A549 (cell line): ENCODE measurements at regions of chr9 and their contacts with region 1.

Region 1: DNA sequence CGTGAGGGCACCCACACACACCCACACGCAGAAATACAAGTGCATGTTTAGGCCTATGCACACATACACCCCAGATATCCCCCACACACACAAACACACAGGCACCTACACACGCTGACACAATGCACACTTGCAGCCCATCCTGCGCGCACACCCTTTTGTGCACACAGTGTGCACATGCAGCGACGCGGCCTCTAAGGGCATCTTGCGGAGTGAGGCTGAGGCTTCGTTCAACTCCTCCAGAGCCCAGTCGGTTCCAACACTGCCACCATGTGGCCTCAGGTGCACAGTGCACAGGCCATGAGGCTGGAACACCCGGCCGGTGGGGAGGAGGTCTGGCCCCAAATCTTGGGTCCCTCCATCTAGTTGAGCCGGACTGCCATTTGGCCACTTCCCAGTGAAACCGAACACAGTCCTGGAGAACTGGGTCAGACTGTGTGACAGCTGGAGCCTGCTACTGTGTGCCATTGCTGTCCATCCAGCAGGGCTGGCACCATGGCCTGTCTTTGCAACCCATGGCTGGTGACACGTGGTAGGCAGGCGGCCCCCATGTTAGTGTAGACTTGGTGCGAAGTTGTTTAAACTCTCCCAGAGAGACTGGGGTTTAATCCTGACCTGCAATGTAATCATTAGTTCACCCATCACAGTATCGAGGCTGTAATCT is 97.7 kb upstream of the MVB12B start:
- DNase-seq: peak; percentile 73 to 76
- ATAC-seq: peak; percentile 86 to 97
- H3K4me3 ChIP-seq: no peak overlapping the region
- H3K27ac ChIP-seq: no peak overlapping the region
- H3K4me1 ChIP-seq: no peaks in the 10 kb centered on the region
- CTCF ChIP-seq: peak; percentile 78
- EP300 ChIP-seq: no peak
- POLR2A ChIP-seq: no peak
- RAD21 ChIP-seq: peak; percentile 80 to 84

Region 2: DNA sequence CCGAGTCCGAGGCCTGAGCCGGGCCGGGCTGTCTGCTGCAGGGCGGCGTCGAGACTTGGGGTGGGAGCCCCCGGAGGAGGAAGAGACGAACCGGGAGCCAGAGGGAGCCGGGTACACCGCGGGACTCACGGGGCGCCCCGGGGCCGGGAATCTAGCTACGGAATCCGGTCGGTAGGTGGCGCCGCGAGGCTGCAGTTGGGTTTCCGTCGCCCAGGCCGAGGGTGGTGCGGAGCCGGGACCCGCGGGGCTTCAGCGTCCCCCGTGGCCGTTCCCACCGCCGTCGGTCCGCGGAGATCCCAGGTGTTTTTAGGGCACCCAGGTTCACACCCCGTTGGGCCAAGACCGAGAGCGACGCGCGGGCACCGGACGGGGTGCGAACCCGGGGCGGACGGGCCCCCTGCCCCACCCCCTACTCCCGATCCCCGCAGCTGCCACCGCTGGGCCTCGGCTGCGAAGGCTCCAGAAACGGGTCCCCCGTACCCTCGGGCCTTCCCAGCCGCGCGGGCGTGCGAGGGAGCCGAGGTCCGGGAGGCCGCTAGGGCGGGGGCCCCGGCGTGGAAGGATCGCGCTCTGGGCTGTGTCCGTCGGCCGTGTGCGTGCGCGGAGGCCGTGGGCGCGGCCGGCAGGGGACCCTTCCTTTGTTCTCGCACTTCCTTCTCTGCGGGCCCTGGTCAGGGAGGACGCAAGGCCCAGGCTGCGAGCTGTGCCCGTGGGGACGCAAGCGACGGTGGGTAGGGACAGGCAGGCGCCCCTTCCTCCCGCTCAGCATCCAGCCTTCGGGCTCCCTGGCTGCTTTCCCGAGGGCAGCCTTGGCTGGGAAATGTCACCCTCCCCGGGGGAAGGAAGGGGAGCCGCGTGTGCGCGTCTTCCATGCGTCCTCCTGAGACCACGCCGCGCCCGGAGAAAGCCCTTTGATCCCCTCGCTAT is 820.7 kb before region 1 on chr9:
- CTCF ChIA-PET with region 1: interaction called, 97 read pairs
- POLR2A ChIA-PET with region 1: no interaction called
- DNase-seq: peak; percentile 74 to 96
- ATAC-seq: peak; percentile 79 to 92
- H3K4me3 ChIP-seq: peak overlapping the region; percentile 85
- H3K27ac ChIP-seq: peak overlapping the region; percentile 88
- H3K4me1 ChIP-seq: 0 out of 3 replicates have a peak, but pooled peaks cover 4% of the 10 kb centered on the region
- CTCF ChIP-seq: peak; percentile 94
- EP300 ChIP-seq: no peak
- POLR2A ChIP-seq: no peak
- RAD21 ChIP-seq: peak; percentile 93 to 98

Region 3: GRCh38 chr9:126027566-126027965 is 201.3 kb before region 1 on chr9:
- CTCF ChIA-PET with region 1: no interaction called
- POLR2A ChIA-PET with region 1: no interaction called
- DNase-seq: no peak
- ATAC-seq: no peak
- H3K4me3 ChIP-seq: no peak overlapping the region
- H3K27ac ChIP-seq: no peak overlapping the region
- H3K4me1 ChIP-seq: no peaks in the 10 kb centered on the region
- CTCF ChIP-seq: no peak
- EP300 ChIP-seq: no peak
- POLR2A ChIP-seq: no peak
- RAD21 ChIP-seq: no peak

Region 4: GRCh38 chr9:126108240-126108639 is 120.7 kb before region 1 on chr9:
- CTCF ChIA-PET with region 1: no interaction called
- POLR2A ChIA-PET with region 1: no interaction called
- DNase-seq: no peak
- ATAC-seq: peak; percentile 63 to 64; a peak in 3 of 6 replicates
- H3K4me3 ChIP-seq: no peak overlapping the region
- H3K27ac ChIP-seq: no peak overlapping the region
- H3K4me1 ChIP-seq: no peaks in the 10 kb centered on the region
- CTCF ChIP-seq: no peak
- EP300 ChIP-seq: no peak
- POLR2A ChIP-seq: no peak
- RAD21 ChIP-seq: no peak